ENCODE measurements at regions of chr6 and their contacts with region 1.

Region 1: DNA sequence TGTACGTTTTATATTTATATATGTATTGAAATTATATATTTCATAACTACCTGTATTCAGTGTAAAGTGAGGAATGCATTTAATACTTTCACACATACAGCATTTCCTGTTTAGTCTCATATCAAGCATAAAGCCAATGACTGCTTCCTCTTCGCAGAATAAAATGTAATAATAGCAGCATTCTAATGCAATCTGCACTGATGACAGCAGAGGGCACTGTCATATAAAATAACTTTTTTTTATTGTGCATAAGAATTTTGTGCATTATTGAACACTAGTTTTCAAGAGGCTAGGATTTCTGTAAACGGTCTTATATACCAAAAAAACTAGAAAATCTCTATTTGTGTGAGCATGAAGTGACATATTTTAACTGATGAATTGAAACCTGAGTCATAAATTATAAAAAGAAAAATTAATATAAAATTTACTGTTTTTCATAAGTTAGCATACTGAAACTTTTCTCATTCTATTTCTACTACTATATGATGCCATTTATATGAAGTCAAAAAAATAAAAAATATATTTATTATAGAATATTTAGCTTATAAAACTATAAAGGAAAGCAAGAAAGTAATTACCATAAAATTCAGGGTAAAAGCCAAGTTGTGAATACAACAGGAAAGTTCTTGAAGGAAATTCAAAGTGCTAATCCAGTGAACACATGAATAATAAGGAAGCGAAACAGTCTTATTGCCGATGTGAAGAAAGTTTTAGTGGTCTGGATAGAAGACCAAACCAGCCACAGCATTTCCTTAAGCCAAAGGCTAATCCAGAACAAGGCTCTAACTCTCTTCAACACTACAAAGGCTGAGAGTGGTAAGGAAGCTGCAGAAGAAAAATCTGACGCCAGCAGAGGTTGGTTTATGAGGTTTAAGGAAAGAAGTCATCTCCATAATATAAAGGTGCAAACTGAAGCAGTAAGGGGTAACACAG is 36.3 kb downstream of the RNF146 start:
- DNase-seq: peak in 7 of 9 donors; percentile 24 to 57 (median 47)
- ATAC-seq: peak; percentile 92
- H3K4me3 ChIP-seq: no peak overlapping the region
- H3K4me3 Mint-ChIP-seq: no peak overlapping the region
- H3K27ac ChIP-seq: no peak overlapping the region
- H3K27ac Mint-ChIP-seq: peak overlapping the region in 4 of 9 donors; percentile 1 to 62 (median 34)
- H3K4me1 ChIP-seq: no peaks in the 10 kb centered on the region
- H3K4me1 Mint-ChIP-seq: peaks cover 9 to 59% (median 49%) of the 10 kb centered on the region in 7 donors
- H3K27me3 ChIP-seq: no peaks in the 10 kb centered on the region
- H3K27me3 Mint-ChIP-seq: no peaks in the 10 kb centered on the region

Region 2: DNA sequence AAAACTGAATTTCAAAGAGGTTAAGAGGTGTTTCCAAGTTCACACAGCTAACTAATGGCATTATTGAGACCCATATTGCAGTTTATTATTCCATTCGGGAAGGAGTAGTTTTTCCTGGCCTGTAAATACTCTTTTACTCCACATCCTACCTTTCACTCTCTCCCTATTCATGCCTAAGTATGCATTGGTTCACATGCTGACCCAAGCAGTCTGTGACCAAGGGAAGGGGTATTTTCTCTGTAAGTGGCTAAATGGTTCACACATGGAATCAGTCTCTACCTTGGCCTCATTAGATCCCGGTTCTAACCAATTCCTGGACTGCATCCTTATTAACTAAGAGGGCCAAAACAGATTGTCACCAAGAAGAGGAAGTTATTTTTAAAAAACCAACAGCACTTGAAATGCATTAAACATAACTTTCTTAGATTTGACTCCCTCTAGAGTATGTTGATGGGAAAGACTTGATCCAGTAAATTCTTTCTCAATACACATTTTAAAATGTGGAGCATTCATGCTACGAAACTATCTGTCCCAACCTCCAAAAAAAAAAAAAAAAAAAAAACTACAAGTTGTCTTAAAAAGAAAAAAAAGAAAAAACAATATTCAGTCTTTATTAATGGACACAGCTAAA is 202.4 kb before region 1 on chr6:
- CTCF ChIA-PET with region 1: no interaction called
- POLR2A ChIA-PET with region 1: no interaction called
- intact Hi-C with region 1: no loop called
- DNase-seq: no peak
- ATAC-seq: no peak
- H3K4me3 ChIP-seq: no peak overlapping the region
- H3K4me3 Mint-ChIP-seq: no peak overlapping the region
- H3K27ac ChIP-seq: no peak overlapping the region
- H3K27ac Mint-ChIP-seq: no peak overlapping the region
- H3K4me1 ChIP-seq: no peaks in the 10 kb centered on the region
- H3K4me1 Mint-ChIP-seq: no peaks in the 10 kb centered on the region
- H3K27me3 ChIP-seq: peaks cover 0 to 3% of the 10 kb centered on the region in 2 donors
- H3K27me3 Mint-ChIP-seq: peaks cover 0 to 11% (median 8%) of the 10 kb centered on the region in 5 donors

Region 3: DNA sequence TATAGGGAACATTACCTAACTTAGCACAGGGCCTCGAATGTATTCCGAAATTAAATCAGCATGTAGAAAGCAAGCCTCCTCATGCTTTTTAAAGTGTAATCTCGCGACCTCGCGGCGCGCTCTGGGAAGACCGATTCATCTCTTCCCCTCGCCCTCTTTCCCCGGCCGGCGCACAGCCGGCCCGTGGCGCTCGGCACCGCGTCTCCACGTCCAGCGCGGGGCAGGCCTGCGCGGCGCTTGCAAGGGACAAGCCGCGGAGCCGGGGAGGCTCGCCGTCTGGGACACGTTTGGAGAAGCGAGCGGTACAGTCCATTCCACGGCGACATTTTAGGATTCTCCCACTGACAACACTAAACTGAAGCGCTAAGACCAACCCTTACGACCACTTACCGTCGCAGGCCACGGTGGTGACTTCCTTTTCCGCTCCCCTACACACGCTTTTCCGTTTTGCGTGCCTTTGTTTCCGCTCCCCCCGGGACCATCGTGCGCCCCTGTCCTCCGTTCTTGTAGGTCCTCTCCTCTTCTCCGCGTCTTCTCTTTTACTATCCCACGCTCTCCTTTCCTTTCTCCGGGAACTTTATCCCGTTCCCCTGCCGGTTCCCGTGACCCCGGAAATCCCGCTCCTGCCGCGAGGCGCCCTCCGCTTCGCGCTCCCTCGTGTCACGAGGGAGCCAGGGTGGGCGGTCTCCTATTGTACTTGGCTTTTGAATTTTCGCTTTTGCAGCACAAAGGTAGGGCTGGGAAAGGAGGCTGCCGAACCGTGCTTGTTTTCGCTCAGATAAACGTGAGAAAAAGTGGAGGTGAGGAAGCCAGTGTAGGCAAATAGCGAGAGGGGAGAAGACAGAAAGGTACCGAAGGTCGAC is 40.2 kb after region 1 on chr6 and contains the start of gene ECHDC1:
- CTCF ChIA-PET with region 1: no interaction called
- POLR2A ChIA-PET with region 1: no interaction called
- intact Hi-C with region 1: loop called (anchors 2 kb)
- DNase-seq: peak; percentile 45 to 76 (median 70)
- ATAC-seq: peak; percentile 87
- H3K4me3 ChIP-seq: peak within 1 kb of the TSS; percentile 83
- H3K4me3 Mint-ChIP-seq: no peak within 1 kb of the TSS
- H3K27ac ChIP-seq: peak within 1 kb of the TSS; percentile 91
- H3K27ac Mint-ChIP-seq: no peak within 1 kb of the TSS
- H3K4me1 ChIP-seq: peaks cover 34 to 39% of the 10 kb centered on the region in 2 donors
- H3K4me1 Mint-ChIP-seq: peaks cover 0 to 12% (median 9%) of the 10 kb centered on the region in 7 donors
- H3K27me3 ChIP-seq: no peaks in the 10 kb centered on the region
- H3K27me3 Mint-ChIP-seq: no peaks in the 10 kb centered on the region
- total RNA-seq, gene ECHDC1: 18.1 to 46.5 (median 34.3) TPM

Region 4: GRCh38 chr6:127420556-127420955 is 117.6 kb after region 1 on chr6:
- CTCF ChIA-PET with region 1: interaction called, 23 read pairs
- POLR2A ChIA-PET with region 1: no interaction called
- intact Hi-C with region 1: loop called (anchors 1 kb)
- DNase-seq: peak in 8 of 9 donors; percentile 27 to 75 (median 56)
- ATAC-seq: peak; percentile 99
- H3K4me3 ChIP-seq: no peak overlapping the region
- H3K4me3 Mint-ChIP-seq: no peak overlapping the region
- H3K27ac ChIP-seq: no peak overlapping the region
- H3K27ac Mint-ChIP-seq: peak overlapping the region in 6 of 9 donors; percentile 5 to 81 (median 16)
- H3K4me1 ChIP-seq: no peaks in the 10 kb centered on the region
- H3K4me1 Mint-ChIP-seq: peaks cover 0 to 11% (median 5%) of the 10 kb centered on the region in 7 donors
- H3K27me3 ChIP-seq: no peaks in the 10 kb centered on the region
- H3K27me3 Mint-ChIP-seq: no peaks in the 10 kb centered on the region

Region 5: GRCh38 chr6:127464881-127465459 is 162.0 kb after region 1 on chr6:
- CTCF ChIA-PET with region 1: interaction called, 3 read pairs
- POLR2A ChIA-PET with region 1: no interaction called
- intact Hi-C with region 1: loop called (anchors 2 kb)
- DNase-seq: peak; percentile 11 to 53 (median 39)
- ATAC-seq: peak; percentile 83
- H3K4me3 ChIP-seq: no peak overlapping the region
- H3K4me3 Mint-ChIP-seq: no peak overlapping the region
- H3K27ac ChIP-seq: no peak overlapping the region
- H3K27ac Mint-ChIP-seq: no peak overlapping the region
- H3K4me1 ChIP-seq: no peaks in the 10 kb centered on the region
- H3K4me1 Mint-ChIP-seq: peaks cover 0 to 13% (median 0%) of the 10 kb centered on the region in 7 donors
- H3K27me3 ChIP-seq: no peaks in the 10 kb centered on the region
- H3K27me3 Mint-ChIP-seq: no peaks in the 10 kb centered on the region

Region 6: GRCh38 chr6:127539272-127539671 is 236.3 kb after region 1 on chr6:
- CTCF ChIA-PET with region 1: interaction called, 12 read pairs
- POLR2A ChIA-PET with region 1: no interaction called
- intact Hi-C with region 1: loop called (anchors 1 kb)
- DNase-seq: peak in 3 of 9 donors; percentile 18 to 30 (median 22)
- ATAC-seq: peak; percentile 65
- H3K4me3 ChIP-seq: no peak overlapping the region
- H3K4me3 Mint-ChIP-seq: no peak overlapping the region
- H3K27ac ChIP-seq: no peak overlapping the region
- H3K27ac Mint-ChIP-seq: no peak overlapping the region
- H3K4me1 ChIP-seq: no peaks in the 10 kb centered on the region
- H3K4me1 Mint-ChIP-seq: peaks cover 0 to 3% (median 0%) of the 10 kb centered on the region in 7 donors
- H3K27me3 ChIP-seq: no peaks in the 10 kb centered on the region
- H3K27me3 Mint-ChIP-seq: peaks cover 12 to 30% (median 18%) of the 10 kb centered on the region in 5 donors

Region 7: DNA sequence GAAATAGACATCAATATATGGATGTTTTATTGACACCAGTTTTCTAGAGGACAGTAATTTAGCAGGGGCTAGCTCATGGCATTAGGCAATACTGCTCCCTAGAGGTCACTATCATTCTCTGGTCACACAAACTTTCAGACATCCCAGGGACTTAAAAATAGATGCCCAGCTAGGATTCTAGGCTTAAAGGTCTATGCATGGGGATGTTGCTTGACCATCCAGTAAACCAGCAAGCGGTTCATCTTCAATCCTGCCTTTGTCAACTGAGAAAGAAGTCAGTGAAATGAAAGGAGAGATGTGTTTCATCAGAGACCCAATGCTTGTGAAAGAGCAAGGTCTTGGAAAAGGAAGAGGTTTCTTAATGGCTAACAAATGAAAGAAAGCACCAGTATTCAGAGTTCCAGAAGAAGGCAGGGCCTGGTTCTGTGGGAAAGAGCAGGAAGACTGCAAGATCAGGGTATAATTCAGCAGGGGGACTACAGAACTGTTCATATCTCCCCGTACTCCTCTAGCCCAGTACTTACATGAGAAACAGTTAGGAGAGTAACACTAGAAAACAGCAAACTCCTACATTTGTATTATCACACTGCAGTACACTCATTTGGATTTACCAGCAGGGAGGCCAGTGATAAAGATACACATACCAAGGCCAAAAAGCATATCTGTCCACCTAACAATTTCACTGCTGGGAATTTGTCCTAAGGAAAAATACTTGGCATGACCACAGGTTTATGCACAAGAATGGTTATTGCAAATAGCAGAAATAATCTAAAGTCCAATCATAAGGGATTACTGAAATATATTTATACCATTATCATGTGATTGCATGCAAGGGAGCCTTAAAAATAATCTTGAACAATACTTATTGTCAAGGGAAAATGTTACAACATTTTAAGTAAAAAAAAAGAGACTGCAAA is 1428.5 kb after region 1 on chr6:
- CTCF ChIA-PET with region 1: no interaction called
- POLR2A ChIA-PET with region 1: no interaction called
- intact Hi-C with region 1: loop called in 1 of 2 experiments (anchors 5 kb)
- DNase-seq: peak in 4 of 9 donors; percentile 4 to 14 (median 7)
- ATAC-seq: no peak
- H3K4me3 ChIP-seq: no peak overlapping the region
- H3K4me3 Mint-ChIP-seq: no peak overlapping the region
- H3K27ac ChIP-seq: no peak overlapping the region
- H3K27ac Mint-ChIP-seq: no peak overlapping the region
- H3K4me1 ChIP-seq: no peaks in the 10 kb centered on the region
- H3K4me1 Mint-ChIP-seq: no peaks in the 10 kb centered on the region
- H3K27me3 ChIP-seq: peaks cover 0 to 3% of the 10 kb centered on the region in 2 donors
- H3K27me3 Mint-ChIP-seq: peaks cover 0 to 24% (median 11%) of the 10 kb centered on the region in 5 donors